Vagina (tissue), 2 donors: ENCODE measurements at regions of chr15 and their contacts with region 1.

Region 1: GRCh38 chr15:64566629-64567427 is 106.5 kb downstream of the ZNF609 start:
- DNase-seq: no peak
- H3K4me3 ChIP-seq: no peak overlapping the region
- H3K27ac ChIP-seq: no peak overlapping the region
- H3K4me1 ChIP-seq: peaks cover 28% of the 10 kb centered on the region
- H3K27me3 ChIP-seq: no peaks in the 10 kb centered on the region
- CTCF ChIP-seq: no peak
- POLR2A ChIP-seq: no peak

Region 2: DNA sequence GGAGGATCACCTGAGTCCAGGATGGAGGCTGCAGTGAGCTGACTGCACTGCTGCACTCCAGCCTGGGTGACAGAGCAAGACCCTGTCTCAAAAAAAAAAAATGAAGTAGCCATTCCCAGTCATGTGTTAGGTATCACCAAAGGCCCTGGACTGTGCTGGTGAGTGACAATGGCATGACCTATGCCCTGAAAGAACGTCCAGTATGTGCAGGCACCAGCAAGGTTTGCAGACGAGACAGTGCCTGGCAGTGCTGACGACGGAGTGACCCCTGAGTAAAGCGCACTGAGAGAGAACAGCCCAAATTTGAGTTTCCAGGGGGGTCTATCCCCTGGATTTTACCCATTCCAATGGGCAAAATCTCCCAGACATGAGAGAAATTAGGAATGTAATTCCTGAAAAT is 163.3 kb after region 1 on chr15:
- intact Hi-C with region 1: no loop called
- DNase-seq: no peak
- H3K4me3 ChIP-seq: no peak overlapping the region
- H3K27ac ChIP-seq: no peak overlapping the region
- H3K4me1 ChIP-seq: no peaks in the 10 kb centered on the region
- H3K27me3 ChIP-seq: no peaks in the 10 kb centered on the region
- CTCF ChIP-seq: no peak
- POLR2A ChIP-seq: no peak

Region 3: DNA sequence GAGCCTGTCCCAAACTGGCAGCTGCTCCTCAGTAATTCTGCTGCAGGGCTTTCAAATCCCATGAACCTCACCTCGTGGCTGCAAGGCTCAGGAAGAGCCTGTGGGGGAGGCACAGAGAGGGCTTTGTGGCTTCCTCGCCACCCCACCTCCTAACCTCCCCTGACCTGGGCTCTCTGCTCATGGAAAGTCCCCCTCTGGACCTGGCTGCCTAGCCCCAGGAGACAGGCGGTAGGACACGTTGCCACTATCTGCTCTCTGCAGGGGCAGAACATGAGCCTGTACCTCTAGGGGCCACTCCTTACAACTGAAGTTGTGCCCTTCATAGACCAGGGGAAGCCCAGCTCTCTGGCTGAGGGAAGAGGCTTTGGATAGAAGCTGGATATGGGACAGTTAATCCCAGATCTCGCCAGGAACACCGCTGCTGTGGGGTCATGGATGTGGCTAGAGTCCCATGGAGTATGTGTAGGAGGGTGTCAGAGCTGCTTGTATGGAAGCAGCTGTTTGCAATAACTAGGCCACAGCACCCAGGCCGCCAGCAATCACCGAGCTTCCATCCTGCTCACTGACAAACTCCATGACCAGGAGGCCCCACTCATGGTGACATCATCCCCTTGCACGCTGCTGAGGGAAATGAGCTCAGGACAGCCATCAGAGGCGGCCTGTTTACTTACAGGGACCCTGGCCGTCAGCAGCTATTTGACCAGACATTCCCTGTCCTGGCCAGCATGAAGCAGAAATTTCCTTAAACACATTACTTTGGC is 678.4 kb after region 1 on chr15:
- intact Hi-C with region 1: loop called (anchors 10 kb)
- DNase-seq: peak in 1 of 2 donors; percentile 97
- H3K4me3 ChIP-seq: no peak overlapping the region
- H3K27ac ChIP-seq: peak overlapping the region; percentile 77
- H3K4me1 ChIP-seq: peaks cover 27% of the 10 kb centered on the region
- H3K27me3 ChIP-seq: no peaks in the 10 kb centered on the region
- CTCF ChIP-seq: no peak
- POLR2A ChIP-seq: no peak